HepG2 (cell line): ENCODE measurements at regions of chr11 and their contacts with region 1.

Region 1: GRCh38 chr11:102157219-102157618 is 47.0 kb downstream of the YAP1 start:
- DNase-seq: peak; percentile 81
- ATAC-seq: peak; percentile 75
- H3K4me3 ChIP-seq: no peak overlapping the region
- H3K27ac ChIP-seq: peak overlapping the region; percentile 8
- H3K4me1 ChIP-seq: peaks cover 64% of the 10 kb centered on the region
- H3K27me3 ChIP-seq: no peaks in the 10 kb centered on the region
- CTCF ChIP-seq: no peak
- EP300 ChIP-seq: no peak
- POLR2A ChIP-seq: no peak
- RAD21 ChIP-seq: no peak

Region 2: GRCh38 chr11:101786916-101787315 is 370.3 kb before region 1 on chr11:
- CTCF ChIA-PET with region 1: no interaction called
- POLR2A ChIA-PET with region 1: no interaction called
- in situ Hi-C with region 1: no loop called
- intact Hi-C with region 1: no loop called
- DNase-seq: no peak
- ATAC-seq: no peak
- H3K4me3 ChIP-seq: no peak overlapping the region
- H3K27ac ChIP-seq: no peak overlapping the region
- H3K4me1 ChIP-seq: no peaks in the 10 kb centered on the region
- H3K27me3 ChIP-seq: no peaks in the 10 kb centered on the region
- CTCF ChIP-seq: no peak
- EP300 ChIP-seq: no peak
- POLR2A ChIP-seq: no peak
- RAD21 ChIP-seq: no peak

Region 3: GRCh38 chr11:102061276-102061675 is 95.9 kb before region 1 on chr11:
- CTCF ChIA-PET with region 1: no interaction called
- POLR2A ChIA-PET with region 1: no interaction called
- in situ Hi-C with region 1: no loop called
- intact Hi-C with region 1: loop called (anchors 5 kb)
- DNase-seq: peak; percentile 21
- ATAC-seq: peak; percentile 89
- H3K4me3 ChIP-seq: no peak overlapping the region
- H3K27ac ChIP-seq: no peak overlapping the region
- H3K4me1 ChIP-seq: 0 out of 2 replicates have a peak, but pooled peaks cover 10% of the 10 kb centered on the region
- H3K27me3 ChIP-seq: no peaks in the 10 kb centered on the region
- CTCF ChIP-seq: peak; percentile 73
- EP300 ChIP-seq: no peak
- POLR2A ChIP-seq: no peak
- RAD21 ChIP-seq: no peak; the same call in 1 of the 2 replicates

Region 4: DNA sequence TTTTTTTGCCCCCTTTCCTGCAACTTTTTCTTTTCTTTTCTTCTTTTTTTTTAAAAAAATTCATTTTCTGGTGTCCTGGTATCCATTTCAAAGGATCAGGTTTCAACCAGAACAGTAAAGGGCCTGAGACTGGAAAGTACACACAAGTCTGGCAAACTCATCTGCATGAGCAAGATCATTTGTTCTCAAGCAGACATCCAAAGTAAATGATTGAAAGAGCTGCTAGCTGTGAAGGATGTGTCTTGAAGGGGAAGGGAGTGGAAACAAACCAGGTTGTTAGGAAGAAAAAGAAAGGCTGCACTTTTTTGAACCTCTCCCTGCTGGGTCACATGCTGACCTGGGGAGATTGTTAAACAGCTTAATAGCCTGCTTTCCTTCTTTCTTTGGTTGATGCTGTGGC is 41.7 kb before region 1 on chr11:
- CTCF ChIA-PET with region 1: no interaction called
- POLR2A ChIA-PET with region 1: interaction called, 4 read pairs
- in situ Hi-C with region 1: no loop called
- intact Hi-C with region 1: loop called (anchors 5 kb)
- DNase-seq: peak; percentile 96
- ATAC-seq: peak; percentile 78
- H3K4me3 ChIP-seq: peak overlapping the region; percentile 32 to 88 (median 39); a peak in 4 of 6 replicates
- H3K27ac ChIP-seq: peak overlapping the region; percentile 70
- H3K4me1 ChIP-seq: peaks cover 67% of the 10 kb centered on the region
- H3K27me3 ChIP-seq: no peaks in the 10 kb centered on the region; a peak in 1 of 5 replicates
- CTCF ChIP-seq: no peak
- EP300 ChIP-seq: peak in 1 of 2 experiments; percentile 73; a peak in 2 of 4 replicates
- POLR2A ChIP-seq: peak in 1 of 2 experiments; percentile 16; a peak in 2 of 4 replicates
- RAD21 ChIP-seq: no peak

Region 5: DNA sequence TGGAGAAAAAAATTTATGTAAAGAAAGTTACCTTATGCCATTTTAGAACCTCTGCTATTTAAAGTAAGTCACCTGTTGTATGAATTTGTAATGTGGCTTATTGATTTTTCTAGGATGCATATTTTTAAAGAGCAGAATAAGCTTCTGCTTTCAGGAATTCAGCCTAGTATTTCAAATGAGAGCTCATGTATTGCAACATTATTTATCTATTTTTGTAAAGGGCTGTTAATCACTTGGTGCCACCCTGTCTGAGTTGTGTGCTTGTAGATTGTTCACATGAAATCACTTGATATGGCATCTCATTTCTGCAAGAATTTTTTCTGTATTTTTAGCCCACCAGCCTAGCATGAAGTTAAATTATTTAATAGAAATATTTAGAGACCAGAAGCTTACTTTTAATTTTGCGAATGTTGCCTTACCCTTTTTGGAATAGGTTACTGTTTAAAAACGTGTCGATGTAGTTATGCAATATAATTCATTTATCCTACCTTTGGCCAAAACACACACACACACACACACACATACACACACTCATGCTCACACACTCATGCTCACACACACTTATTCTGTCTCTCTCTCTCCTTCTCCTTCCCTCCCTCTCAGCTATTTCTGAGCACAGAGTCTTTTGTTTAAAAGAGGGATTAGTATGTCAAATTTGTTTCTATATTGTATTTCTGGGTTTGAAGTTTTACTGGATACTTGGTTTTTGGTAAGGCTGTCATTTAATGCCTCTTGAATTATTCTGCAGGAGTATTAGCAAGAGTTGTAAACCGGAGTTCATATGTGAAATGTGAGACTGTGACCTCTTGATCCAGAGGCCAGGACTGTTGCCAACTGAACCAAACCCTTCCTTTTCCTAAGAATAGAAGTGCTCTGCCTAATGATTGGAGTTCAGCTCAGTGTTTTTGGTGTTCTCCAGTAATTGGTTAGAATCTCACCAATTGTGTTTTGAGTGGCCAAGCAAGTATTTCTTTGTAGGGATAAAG is 12.6 kb before region 1 on chr11:
- CTCF ChIA-PET with region 1: no interaction called
- POLR2A ChIA-PET with region 1: interaction called, 3 read pairs
- in situ Hi-C with region 1: no loop called
- intact Hi-C with region 1: loop called (anchors 1 kb)
- DNase-seq: peak; percentile 60
- ATAC-seq: peak; percentile 65
- H3K4me3 ChIP-seq: no peak overlapping the region
- H3K27ac ChIP-seq: peak overlapping the region; percentile 58
- H3K4me1 ChIP-seq: peaks cover 75% of the 10 kb centered on the region
- H3K27me3 ChIP-seq: no peaks in the 10 kb centered on the region
- CTCF ChIP-seq: no peak
- EP300 ChIP-seq: no peak
- POLR2A ChIP-seq: no peak
- RAD21 ChIP-seq: no peak

Region 6: DNA sequence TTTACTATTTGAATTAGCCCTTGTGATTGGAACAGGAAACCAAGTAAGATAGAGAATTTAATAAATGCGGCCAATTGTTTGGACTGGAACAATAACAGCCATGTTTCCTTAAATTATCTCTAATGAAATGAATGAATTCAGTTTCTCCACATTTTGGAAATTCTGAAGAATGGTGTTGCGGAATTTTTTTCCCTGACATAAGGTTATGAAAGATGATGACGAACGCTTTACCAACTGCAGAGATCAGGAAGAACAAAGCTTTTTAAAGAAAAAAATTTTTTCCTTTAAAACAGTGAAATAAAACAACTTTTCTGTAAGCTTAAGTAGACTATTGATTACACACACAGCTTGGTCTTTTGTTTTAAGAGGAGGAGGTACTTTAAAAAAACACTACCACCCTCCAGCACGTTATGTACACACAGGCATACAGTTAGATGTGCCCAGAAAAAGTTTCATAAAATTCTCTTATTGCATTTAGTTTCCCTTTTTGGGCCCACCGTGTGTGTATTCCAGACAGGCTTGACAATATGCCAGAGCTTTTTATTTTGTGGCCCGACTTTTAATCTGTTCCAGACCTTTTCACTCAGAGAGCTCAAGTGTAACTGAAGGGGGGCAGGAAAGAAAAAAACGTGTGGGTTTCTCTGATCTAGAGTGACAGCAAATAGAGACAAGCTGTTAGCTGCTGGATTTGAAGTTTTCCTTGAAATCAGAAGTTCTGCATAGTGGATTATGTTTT is 30.4 kb after region 1 on chr11:
- CTCF ChIA-PET with region 1: no interaction called
- POLR2A ChIA-PET with region 1: interaction called, 4 read pairs
- in situ Hi-C with region 1: no loop called
- intact Hi-C with region 1: loop called (anchors 2 kb)
- DNase-seq: peak; percentile 41
- ATAC-seq: no peak
- H3K4me3 ChIP-seq: peak overlapping the region in 1 of 3 experiments; percentile 7; a peak in 1 of 6 replicates
- H3K27ac ChIP-seq: peak overlapping the region; percentile 72
- H3K4me1 ChIP-seq: peaks cover 87% of the 10 kb centered on the region
- H3K27me3 ChIP-seq: no peaks in the 10 kb centered on the region
- CTCF ChIP-seq: no peak
- EP300 ChIP-seq: peak in 1 of 2 experiments; percentile 21; a peak in 1 of 4 replicates
- POLR2A ChIP-seq: no peak
- RAD21 ChIP-seq: no peak

Region 7: DNA sequence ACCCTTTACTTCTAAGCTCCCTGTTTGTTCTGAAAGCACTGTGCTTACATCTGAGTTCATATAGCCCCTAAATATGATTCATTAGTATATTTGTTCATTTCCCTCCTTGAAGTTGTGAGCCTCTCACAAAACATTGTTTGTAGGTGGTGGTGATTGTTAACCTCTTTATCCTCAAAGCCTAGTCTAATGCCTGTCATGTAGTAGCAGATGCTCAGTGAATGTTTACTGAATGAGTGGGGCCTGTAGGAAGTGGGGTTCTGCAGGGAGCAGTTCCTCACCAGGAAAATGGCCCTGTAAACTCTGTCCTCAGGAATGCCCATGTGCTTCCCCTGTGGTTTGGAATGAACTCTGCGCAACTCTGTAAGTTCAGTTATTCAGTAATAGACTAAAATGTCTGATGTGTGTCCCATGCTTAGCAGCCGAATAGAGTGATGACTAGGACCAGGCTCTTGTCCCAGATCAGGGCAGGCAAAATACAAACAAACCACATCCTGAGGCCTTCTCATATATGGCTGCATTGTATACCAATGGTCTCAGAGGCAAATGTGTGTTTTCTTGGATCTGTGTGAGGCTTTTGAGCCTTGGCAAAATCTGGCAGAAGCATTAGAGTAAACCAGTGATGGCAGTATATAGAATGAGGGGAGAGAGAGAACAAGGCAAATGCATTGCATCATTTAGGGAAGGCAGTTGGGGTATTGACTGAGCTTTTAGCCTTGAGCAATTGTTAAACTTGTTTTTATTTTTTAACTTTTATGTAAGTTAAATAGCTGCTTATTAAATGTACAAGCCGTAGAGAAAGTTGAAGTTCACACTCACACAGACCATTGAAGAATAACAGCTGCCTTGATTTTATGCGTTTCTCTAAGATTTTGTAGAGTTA is 68.7 kb after region 1 on chr11:
- CTCF ChIA-PET with region 1: no interaction called
- POLR2A ChIA-PET with region 1: no interaction called
- in situ Hi-C with region 1: no loop called
- intact Hi-C with region 1: no loop called
- DNase-seq: peak; percentile 28
- ATAC-seq: no peak
- H3K4me3 ChIP-seq: no peak overlapping the region
- H3K27ac ChIP-seq: no peak overlapping the region
- H3K4me1 ChIP-seq: peaks cover 57% of the 10 kb centered on the region
- H3K27me3 ChIP-seq: no peaks in the 10 kb centered on the region
- CTCF ChIP-seq: no peak
- EP300 ChIP-seq: no peak
- POLR2A ChIP-seq: no peak
- RAD21 ChIP-seq: no peak